HEK293T (cell line): ENCODE measurements at regions of chr2 and their contacts with region 1.

Region 1: DNA sequence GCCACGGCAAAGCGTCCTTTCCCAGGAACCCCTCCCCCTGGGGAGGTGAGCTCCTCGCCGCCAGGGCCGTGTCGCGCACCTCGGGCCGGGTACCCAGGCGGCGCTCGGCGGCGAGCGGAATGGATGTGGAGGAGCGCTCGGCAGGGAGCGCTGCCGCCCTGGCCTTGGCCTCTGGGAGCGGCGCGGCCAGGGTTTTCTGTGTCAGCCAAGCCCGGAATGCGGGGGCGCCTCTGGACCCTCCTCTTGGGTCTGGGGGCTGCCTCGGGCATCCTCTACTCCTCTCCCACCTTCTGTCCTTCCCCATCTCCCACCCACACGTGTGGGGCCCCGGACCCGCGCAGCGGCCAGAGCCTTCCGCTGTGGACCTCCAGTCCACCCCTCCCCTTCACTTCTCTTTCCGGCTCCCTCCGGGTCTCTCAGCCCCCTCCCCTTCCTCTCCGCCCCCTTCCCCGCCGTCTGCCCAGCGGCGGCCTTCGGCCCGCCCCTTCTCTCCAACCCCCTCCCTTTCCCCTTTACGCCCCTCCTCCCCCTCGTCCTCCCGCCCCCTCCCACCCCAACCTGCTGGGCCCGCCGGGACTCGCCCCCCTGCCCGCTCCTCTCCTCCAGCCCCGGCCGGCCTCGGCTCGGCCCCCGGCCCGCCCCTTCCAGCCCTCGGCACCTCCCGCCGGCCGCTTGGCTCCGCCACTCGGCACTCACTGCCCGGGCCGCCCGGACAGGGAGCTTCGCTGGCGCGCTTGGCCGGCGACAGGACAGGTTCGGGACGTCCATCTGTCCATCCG is at the start of gene MERTK:
- DNase-seq: peak; percentile 90

Region 2: DNA sequence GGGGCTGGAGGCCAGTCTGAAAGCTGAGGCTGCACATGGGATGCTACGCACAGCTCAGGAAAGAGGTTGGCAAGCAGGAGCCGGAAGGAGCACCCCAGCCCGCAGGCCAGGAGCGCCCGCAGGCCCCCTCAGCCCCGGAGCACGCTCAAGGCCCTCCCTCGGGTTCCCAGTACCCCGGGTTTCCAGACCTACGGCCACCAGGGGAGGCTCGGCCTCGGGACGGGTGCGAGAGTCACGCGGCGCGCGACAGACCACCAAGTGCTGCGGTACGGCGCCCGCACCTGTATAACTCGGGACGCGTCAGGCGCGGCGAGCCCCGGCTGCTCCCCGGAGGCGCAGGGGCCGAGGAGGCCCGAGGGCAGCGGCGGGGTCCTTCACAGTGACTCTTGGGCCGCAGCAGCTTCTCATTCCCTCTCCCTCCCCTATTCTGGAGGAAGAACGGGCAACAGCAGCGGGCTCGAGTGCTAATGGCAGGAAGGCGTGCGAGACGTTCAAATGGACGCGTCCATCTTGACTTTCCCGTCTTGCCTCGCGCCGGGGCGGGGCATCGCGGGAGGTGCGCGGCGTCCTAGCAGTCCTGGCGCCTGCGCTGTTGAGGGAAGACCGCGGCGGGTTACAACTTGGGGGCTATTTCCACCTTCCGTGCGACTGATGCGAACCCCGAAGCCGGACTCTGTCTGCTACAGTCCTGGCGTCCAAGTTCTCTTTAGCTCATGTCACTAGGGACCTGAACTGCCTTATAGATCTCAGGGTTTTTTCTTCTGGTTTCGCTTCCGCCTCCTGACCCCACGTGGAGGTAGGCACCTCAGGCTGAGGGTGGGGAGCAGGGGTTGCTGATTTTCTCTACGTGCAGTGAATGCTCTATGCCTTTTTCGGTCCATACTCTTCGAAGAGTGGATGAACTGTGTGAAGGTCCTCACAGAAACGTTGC is 14.2 kb before region 1 on chr2 and contains the start of gene ANAPC1:
- CTCF ChIA-PET with region 1: interaction called, 5 read pairs
- POLR2A ChIA-PET with region 1: interaction called, 15 read pairs
- DNase-seq: peak; percentile 85